CD8-positive, alpha-beta T cell (primary cell): ENCODE measurements at regions of chr11 and their contacts with region 1.

Region 1: GRCh38 chr11:2901854-2902783 is 16.5 kb upstream of the CDKN1C start:
- DNase-seq: peak; percentile 72 to 94 (median 89)
- ATAC-seq: peak; percentile 77
- H3K4me3 ChIP-seq: peak overlapping the region; percentile 70 to 72
- H3K4me3 Mint-ChIP-seq: peak overlapping the region; percentile 78
- H3K27ac ChIP-seq: peak overlapping the region; percentile 40 to 74
- H3K27ac Mint-ChIP-seq: peak overlapping the region; percentile 32
- H3K4me1 ChIP-seq: peaks cover 42% of the 10 kb centered on the region
- H3K4me1 Mint-ChIP-seq: peaks cover 47% of the 10 kb centered on the region
- H3K27me3 ChIP-seq: no peaks in the 10 kb centered on the region
- H3K27me3 Mint-ChIP-seq: no peaks in the 10 kb centered on the region
- CTCF ChIP-seq: no peak

Region 2: GRCh38 chr11:2699531-2700414 is 202.3 kb before region 1 on chr11 and contains the start of gene KCNQ1OT1:
- CTCF ChIA-PET with region 1: no interaction called
- POLR2A ChIA-PET with region 1: no interaction called
- intact Hi-C with region 1: loop called in 1 of 2 experiments (anchors 1 kb)
- DNase-seq: peak; percentile 74 to 94 (median 84)
- ATAC-seq: peak; percentile 93
- H3K4me3 ChIP-seq: peak within 1 kb of the TSS; percentile 61 to 67
- H3K4me3 Mint-ChIP-seq: peak within 1 kb of the TSS; percentile 80
- H3K27ac ChIP-seq: peak within 1 kb of the TSS; percentile 40 to 43
- H3K27ac Mint-ChIP-seq: peak within 1 kb of the TSS; percentile 62
- H3K4me1 ChIP-seq: peaks cover 5% of the 10 kb centered on the region
- H3K4me1 Mint-ChIP-seq: peaks cover 9% of the 10 kb centered on the region
- H3K27me3 ChIP-seq: no peaks in the 10 kb centered on the region
- H3K27me3 Mint-ChIP-seq: no peaks in the 10 kb centered on the region
- CTCF ChIP-seq: no peak
- total RNA-seq, gene KCNQ1OT1: 0.42 to 0.52 TPM

Region 3: DNA sequence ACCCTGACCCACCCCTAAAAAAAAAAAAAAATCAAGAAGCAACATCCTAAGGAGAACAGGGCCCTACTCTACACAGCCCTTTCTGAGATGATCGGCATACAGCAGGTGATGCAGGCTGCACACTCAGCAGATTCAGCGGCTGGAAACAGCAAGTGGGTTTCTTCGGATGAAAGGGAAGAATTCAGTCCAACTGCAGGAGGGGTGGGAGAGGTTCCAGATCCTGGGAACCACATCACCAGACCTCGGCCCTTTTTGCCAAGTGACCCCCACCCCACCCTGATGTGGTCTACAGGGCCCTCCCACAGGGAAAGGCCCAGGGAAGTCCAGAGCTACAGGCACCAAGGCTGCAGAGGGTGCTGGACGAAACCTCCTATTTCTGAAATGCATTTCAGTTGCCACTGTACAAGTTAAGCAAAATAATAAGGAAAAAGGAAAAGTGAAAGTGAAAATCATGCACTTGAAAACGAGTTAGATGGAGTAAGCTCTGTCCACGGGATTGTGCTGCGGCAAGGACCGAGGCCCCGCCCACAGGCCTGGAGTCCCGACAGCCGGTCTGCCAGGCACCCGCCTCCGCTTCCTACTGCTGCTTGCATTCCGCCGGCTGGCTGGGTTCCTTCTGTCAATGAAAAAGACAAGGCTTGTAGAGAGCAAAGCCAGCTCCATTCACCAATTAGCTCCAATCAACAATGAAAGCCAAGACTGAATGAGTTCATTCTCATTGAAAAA is 43.1 kb after region 1 on chr11:
- CTCF ChIA-PET with region 1: no interaction called
- POLR2A ChIA-PET with region 1: no interaction called
- intact Hi-C with region 1: loop called in 1 of 2 experiments (anchors 1 kb)
- DNase-seq: peak in 4 of 9 experiments; percentile 44 to 63 (median 51)
- ATAC-seq: peak; percentile 40
- H3K4me3 ChIP-seq: no peak overlapping the region
- H3K4me3 Mint-ChIP-seq: peak overlapping the region; percentile 56
- H3K27ac ChIP-seq: peak overlapping the region in 1 of 2 experiments; percentile 1
- H3K27ac Mint-ChIP-seq: peak overlapping the region; percentile 76
- H3K4me1 ChIP-seq: peaks cover 35% of the 10 kb centered on the region
- H3K4me1 Mint-ChIP-seq: peaks cover 49% of the 10 kb centered on the region
- H3K27me3 ChIP-seq: no peaks in the 10 kb centered on the region
- H3K27me3 Mint-ChIP-seq: no peaks in the 10 kb centered on the region
- CTCF ChIP-seq: no peak